AG04450 (cell line): ENCODE measurements at regions of chr16 and their contacts with region 1.

Region 1: DNA sequence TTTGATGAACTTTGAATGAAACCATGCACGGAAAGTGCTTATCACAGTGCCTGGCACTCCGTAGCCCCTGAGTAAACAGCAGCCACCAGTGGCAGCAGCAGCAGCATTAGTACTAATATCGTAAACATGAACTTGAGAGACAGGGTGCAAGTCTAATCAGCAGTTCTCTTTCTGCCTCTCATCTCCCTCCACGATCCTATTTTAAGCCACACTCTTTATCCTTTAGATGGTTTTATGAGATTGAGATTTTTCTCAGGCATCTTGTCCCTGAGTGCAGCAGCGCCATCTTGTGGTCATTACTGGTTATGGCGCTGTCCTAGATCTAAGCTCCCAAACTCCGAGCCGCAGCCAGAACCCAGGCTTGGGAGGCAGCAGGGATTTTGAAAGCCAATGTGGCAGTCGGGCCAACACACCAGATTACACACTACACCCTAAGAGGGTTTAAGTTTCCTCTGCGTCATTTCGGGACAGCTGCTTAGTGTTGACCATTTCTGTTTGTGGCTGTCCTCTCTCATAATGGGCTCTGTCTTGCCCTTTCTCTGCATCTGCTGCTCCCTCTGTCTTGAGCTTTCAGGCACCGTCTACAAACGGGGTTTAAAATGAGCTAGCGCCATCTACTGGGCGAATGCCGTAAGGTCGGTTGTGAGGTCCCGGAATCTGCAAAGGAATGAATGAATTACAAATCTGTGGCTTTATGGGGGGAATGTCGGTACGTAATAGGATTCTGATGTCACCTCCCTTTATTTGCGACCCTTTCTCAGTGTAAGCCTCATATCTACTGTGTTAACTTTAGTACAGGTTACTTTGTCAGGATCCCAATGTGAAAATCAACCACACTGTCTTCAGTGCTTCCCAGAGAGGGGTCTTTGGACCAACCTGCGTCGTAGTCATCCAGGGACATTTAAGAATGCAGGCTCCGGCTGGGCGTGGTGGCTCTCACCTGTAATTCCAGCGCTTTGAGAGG is 64.5 kb downstream of the CYLD start:
- DNase-seq: peak; percentile 77
- H3K4me3 ChIP-seq: peak overlapping the region; percentile 60
- H3K27ac ChIP-seq: peak overlapping the region; percentile 48
- H3K27me3 ChIP-seq: no peaks in the 10 kb centered on the region
- CTCF ChIP-seq: peak; percentile 75

Region 2: DNA sequence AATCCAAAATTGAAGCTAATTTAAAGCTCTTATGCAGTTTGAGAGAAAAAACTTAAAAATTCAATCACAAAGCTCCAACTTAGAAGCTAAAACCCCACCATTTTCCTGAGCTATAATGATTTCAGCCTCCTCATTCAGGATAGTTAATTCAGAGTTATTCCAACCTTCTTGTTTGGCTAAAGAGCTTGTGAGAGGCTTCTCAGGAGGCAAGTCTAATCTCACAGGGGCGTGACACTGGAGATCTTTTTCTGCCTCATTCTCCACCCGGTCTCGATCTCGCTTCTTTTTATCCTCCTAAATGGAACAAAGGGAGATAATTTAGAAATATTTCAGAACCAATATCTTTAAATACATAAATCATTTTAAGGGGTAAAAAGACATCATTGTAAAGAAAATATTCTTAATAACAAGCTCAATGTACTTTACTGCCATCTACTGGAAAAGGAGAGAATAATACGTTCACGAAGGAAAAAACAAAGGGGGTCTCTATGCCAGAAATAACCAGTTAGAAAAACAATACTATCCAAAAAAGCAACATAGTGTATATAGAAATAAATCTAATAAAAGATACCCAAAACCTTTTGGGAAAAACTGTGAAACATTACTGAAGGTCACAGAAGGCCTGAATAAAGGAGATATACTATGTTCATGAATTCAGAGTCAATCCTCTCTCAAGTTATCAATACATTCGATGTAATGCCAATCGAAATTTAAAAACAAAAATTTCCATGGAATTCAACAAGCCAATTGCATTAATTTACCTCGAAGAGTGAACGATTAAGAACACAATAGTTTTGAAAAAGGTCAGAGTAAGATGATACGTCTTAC is 451.5 kb before region 1 on chr16:
- CTCF ChIA-PET with region 1: interaction called, 25 read pairs
- POLR2A ChIA-PET with region 1: no interaction called
- DNase-seq: no peak
- H3K4me3 ChIP-seq: no peak overlapping the region
- H3K27ac ChIP-seq: no peak overlapping the region
- H3K27me3 ChIP-seq: no peaks in the 10 kb centered on the region
- CTCF ChIP-seq: peak; percentile 65

Region 3: DNA sequence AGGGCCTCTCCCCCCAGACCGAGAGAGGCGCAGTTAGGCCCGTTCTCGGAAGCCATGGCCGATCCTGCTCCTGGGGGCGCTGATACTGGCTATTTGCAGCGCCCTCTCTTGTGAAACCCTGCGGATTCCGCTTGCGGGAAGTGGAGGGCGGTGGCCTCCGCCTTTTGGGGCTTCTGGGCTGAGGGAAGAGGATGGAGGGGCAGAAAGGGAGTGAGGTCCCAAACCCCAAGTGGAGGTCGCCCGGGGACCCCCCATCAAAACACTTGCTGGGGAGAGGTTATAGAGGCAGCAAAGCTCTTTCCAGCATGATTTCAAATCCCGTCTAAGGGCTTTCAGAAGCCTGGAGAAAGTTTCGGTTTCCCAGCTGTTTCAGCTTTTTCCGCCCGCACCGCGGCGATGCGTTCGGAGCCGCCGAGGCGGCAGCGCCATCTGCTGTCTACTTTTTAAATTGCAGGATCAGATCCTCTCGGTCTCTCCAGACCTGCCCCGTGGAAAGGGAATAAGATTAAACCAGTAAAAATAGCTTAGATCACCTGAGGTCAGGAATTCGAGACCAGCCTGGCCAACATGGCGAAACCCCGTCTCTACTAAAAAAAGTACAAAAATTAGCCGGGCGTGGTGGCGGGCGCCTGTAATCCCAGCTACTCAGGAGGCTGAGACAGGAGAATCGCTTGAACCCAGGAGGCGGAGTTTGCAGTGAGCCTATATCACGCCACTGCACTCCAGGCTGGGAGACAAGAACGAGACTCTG is 141.1 kb before region 1 on chr16:
- CTCF ChIA-PET with region 1: interaction called, 140 read pairs
- POLR2A ChIA-PET with region 1: no interaction called
- DNase-seq: peak; percentile 32
- H3K4me3 ChIP-seq: peak overlapping the region; percentile 57
- H3K27ac ChIP-seq: no peak overlapping the region
- H3K27me3 ChIP-seq: no peaks in the 10 kb centered on the region
- CTCF ChIP-seq: peak; percentile 86

Region 4: DNA sequence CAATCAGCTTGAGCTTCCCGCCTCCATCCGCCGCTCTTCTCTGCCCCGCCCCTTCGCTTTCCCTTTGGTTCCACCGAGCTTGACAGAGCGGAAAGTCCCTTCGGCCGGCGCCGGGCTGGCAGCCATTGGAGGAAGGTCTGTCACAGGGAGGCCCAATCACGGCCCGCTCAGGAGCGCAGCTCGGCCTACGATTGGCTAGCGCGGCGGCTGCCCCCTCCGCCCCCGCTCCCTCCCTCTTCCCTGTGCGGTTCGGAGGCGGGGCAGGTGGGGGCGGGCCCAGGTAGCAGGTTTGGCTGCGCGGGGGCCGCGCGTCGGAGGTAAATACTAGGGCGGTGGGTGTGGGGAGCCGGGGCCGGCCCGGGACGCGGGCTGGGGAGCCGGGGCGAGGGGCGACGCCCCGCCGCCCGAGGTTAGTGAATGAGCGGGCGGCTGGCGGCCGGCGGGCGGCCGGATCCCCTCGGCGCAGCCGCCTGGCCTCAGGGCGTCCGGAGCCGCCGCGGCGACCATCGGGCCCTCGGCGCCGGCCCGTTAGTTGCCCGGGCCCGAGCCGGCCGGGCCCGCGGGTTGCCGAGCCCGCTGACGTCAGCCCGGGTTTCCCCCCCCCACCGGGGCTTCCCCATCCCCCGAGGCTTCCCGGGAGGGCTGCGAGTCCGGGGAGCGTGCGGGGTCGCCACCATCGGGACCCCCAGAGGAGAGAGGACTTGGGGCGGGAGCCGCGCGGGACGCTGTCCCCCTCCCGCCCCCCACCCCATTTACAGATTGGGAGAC is 64.4 kb before region 1 on chr16 and contains the start of gene CYLD:
- CTCF ChIA-PET with region 1: interaction called, 43 read pairs
- POLR2A ChIA-PET with region 1: no interaction called
- DNase-seq: peak; percentile 98
- H3K4me3 ChIP-seq: peak within 1 kb of the TSS; percentile 78
- H3K27ac ChIP-seq: peak within 1 kb of the TSS; percentile 68
- H3K27me3 ChIP-seq: peaks cover 2% of the 10 kb centered on the region
- CTCF ChIP-seq: no peak
- polyA plus RNA-seq, gene CYLD: 22.6 and 27.8 TPM in 2 replicates

Region 5: GRCh38 chr16:50781043-50781442 is 25.3 kb before region 1 on chr16:
- CTCF ChIA-PET with region 1: interaction called, 102 read pairs
- POLR2A ChIA-PET with region 1: no interaction called
- DNase-seq: no peak
- H3K4me3 ChIP-seq: no peak overlapping the region
- H3K27ac ChIP-seq: no peak overlapping the region
- H3K27me3 ChIP-seq: no peaks in the 10 kb centered on the region
- CTCF ChIP-seq: 0 out of 2 replicates have a peak, but pooled peaks have one; percentile 10

Region 6: GRCh38 chr16:50861970-50862411 is 55.6 kb after region 1 on chr16:
- CTCF ChIA-PET with region 1: interaction called, 11 read pairs
- POLR2A ChIA-PET with region 1: no interaction called
- DNase-seq: peak; percentile 23
- H3K4me3 ChIP-seq: no peak overlapping the region
- H3K27ac ChIP-seq: peak overlapping the region; percentile 47
- H3K27me3 ChIP-seq: peaks cover 3% of the 10 kb centered on the region
- CTCF ChIP-seq: no peak

Region 7: DNA sequence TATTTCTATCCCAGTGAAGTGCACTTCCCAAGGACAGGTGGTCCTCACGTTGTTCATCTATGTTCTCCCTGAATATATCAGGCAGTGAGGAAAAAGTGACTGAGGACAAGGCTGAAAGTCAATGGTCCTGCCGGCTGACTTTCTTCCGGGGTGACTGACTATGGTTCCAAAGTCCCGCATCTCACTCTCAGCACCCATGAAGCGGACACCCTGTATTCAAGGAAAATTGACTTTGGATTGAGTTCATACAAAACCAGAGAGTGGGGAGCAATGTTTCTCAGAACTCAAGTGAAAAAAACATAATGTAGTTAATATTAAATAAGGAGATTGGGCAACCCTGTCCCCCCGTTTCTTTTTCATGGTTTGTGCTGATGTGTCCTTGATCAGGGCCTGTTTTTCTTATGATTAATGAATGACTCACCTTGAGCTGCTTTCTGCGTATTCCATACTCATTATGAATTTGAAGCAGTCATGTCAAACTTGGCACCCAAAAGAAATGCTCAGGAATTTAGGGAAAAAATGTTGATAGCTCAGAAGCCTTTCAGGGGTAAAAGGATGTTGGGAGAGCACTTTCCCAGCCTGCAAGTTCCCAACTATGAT is 119.5 kb after region 1 on chr16:
- CTCF ChIA-PET with region 1: no interaction called
- POLR2A ChIA-PET with region 1: no interaction called
- DNase-seq: no peak
- H3K4me3 ChIP-seq: no peak overlapping the region
- H3K27ac ChIP-seq: no peak overlapping the region
- H3K27me3 ChIP-seq: no peaks in the 10 kb centered on the region
- CTCF ChIP-seq: no peak